Vagina (tissue), 2 donors: ENCODE measurements at regions of chr22 and their contacts with region 1.

Region 1: DNA sequence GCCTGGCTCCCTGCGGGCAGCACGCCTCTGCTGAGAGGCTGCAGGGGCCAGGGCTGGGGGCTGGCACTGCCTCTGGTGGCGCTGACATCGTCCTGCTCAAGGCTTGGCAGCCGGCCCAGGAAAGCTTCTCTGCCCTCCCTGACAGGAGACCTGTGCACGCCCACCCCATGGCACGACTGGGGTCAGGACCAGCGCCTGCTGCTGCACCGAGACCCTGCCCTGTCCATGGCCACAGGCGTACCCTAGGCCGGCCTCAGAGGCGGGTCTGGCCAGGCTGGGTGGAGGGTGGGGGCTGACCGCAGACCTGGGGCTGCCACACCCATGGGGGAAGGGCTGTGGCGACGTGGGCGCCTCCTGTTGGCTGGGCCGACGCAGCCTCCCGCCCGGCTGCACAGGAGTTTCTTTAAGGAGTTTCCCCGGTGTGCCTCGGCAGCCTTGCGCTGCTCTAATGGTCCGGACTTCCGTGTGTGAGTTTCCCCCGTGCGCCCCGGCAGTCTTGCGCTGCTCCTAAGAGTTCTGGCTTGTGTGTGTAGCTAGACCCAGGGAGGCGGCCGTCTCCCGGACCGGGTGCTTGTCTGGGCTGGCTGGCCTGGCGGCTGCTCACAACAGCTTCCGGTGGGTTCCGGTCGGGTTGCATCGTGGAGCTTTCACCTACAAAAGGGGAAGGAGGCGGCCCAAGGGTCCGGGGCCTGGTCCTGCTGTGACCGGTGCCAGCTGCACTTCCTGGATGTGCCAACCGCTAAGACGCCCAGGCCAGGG is 4.6 kb downstream of the TRABD start:
- DNase-seq: no peak
- H3K4me3 ChIP-seq: peak overlapping the region; percentile 43 to 53
- H3K27ac ChIP-seq: peak overlapping the region; percentile 89
- H3K4me1 ChIP-seq: peaks cover 63% of the 10 kb centered on the region
- H3K27me3 ChIP-seq: no peaks in the 10 kb centered on the region
- CTCF ChIP-seq: peak in 2 of 3 experiments; percentile 18 to 51
- POLR2A ChIP-seq: peak in 1 of 2 donors; percentile 11

Region 2: DNA sequence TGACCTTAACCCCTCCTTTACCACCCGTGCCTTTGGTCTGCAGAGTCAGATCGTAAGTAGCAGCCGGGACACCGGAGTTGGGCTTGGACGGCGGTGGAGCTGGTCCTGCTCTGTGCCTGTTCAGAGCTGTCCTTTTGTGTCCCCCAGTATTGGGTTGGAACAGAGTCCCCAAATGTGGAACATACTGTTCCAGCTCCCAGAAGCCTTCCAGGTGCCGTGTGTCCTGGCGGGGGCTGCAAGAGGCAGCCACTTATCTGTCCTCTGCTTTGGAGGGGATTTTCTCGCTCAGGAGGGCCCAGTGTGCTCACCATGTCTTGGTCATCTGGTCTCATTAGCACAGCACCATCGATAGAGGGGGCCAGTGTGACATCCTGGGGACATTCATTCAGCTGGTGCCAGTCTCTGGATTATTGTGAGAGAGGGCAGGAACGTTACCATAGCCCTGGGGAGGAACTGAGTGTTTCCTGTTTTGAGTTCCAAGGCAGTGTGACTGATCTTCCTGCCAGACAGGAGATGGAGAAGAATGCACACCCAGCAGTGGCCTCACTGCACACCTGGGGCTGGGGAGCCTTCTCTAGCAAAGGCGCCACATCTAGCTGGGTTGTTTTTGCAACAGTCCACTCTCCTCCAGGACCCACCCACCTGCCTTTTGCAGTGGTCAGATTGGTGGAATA is 259.5 kb before region 1 on chr22:
- intact Hi-C with region 1: loop called (anchors 10 kb)
- DNase-seq: no peak
- H3K4me3 ChIP-seq: no peak overlapping the region
- H3K27ac ChIP-seq: no peak overlapping the region
- H3K4me1 ChIP-seq: peaks cover 54% of the 10 kb centered on the region
- H3K27me3 ChIP-seq: no peaks in the 10 kb centered on the region
- CTCF ChIP-seq: peak in 1 of 3 experiments; percentile 22
- POLR2A ChIP-seq: no peak

Region 3: GRCh38 chr22:49970528-49971231 is 219.7 kb before region 1 on chr22:
- intact Hi-C with region 1: loop called (anchors 5 kb)
- DNase-seq: peak in 1 of 2 donors; percentile 98
- H3K4me3 ChIP-seq: peak overlapping the region; percentile 51 to 68
- H3K27ac ChIP-seq: peak overlapping the region; percentile 89
- H3K4me1 ChIP-seq: peaks cover 59% of the 10 kb centered on the region
- H3K27me3 ChIP-seq: no peaks in the 10 kb centered on the region
- CTCF ChIP-seq: no peak
- POLR2A ChIP-seq: peak in 1 of 2 donors; percentile 86